A549 (cell line): ENCODE measurements at regions of chr2 and their contacts with region 1.

Region 1: GRCh38 chr2:62774555-62775366 is 69.2 kb downstream of the EHBP1 start:
- DNase-seq: peak in 1 of 2 experiments; percentile 83
- ATAC-seq: peak; percentile 72 to 89; a peak in 5 of 6 replicates
- H3K4me3 ChIP-seq: no peak overlapping the region
- H3K27ac ChIP-seq: peak overlapping the region; percentile 74 to 86
- H3K4me1 ChIP-seq: peaks cover 66% of the 10 kb centered on the region
- CTCF ChIP-seq: peak; percentile 95
- EP300 ChIP-seq: no peak
- POLR2A ChIP-seq: no peak
- RAD21 ChIP-seq: peak; percentile 94 to 97

Region 2: DNA sequence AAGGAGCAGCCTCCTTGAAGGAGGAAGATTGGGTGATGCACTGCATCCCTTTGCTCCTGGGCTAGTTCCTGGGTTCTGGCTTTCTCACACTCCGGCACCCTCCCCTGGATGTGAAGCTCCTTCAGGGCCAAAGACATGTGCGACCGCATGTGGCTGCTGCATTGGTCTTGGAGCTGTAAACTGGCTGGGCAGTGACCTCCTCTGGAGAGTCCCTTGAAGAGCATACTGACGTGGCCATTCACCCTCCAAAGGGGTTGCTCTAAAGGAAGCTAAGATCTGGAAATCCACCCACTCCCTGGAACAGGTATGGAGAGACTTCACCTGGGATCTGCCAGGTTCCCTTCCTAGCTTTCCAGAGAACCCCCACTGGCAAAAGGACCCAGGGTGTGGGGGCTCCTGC is 330.9 kb before region 1 on chr2:
- CTCF ChIA-PET with region 1: interaction called, 13 read pairs
- POLR2A ChIA-PET with region 1: no interaction called
- DNase-seq: no peak
- ATAC-seq: peak in 1 of 2 experiments; percentile 57; a peak in 3 of 6 replicates
- H3K4me3 ChIP-seq: no peak overlapping the region
- H3K27ac ChIP-seq: no peak overlapping the region
- H3K4me1 ChIP-seq: no peaks in the 10 kb centered on the region
- CTCF ChIP-seq: no peak
- EP300 ChIP-seq: no peak
- POLR2A ChIP-seq: no peak
- RAD21 ChIP-seq: no peak; a peak in 1 of 5 replicates

Region 3: GRCh38 chr2:62467475-62468321 is 307.1 kb before region 1 on chr2:
- CTCF ChIA-PET with region 1: interaction called, 318 read pairs
- POLR2A ChIA-PET with region 1: no interaction called
- DNase-seq: peak; percentile 25 to 41
- ATAC-seq: peak; percentile 36 to 67; a peak in 4 of 6 replicates
- H3K4me3 ChIP-seq: no peak overlapping the region
- H3K27ac ChIP-seq: peak overlapping the region; percentile 14 to 79; a peak in 5 of 6 replicates
- H3K4me1 ChIP-seq: peaks cover 11% of the 10 kb centered on the region; the same call in 2 of the 3 replicates
- CTCF ChIP-seq: no peak
- EP300 ChIP-seq: no peak
- POLR2A ChIP-seq: no peak
- RAD21 ChIP-seq: no peak

Region 4: GRCh38 chr2:62705007-62705829 is 69.5 kb before region 1 on chr2 and contains the start of gene EHBP1:
- CTCF ChIA-PET with region 1: interaction called, 18 read pairs
- POLR2A ChIA-PET with region 1: interaction called, 9 read pairs
- DNase-seq: peak; percentile 98 to 100
- ATAC-seq: peak; percentile 91 to 96
- H3K4me3 ChIP-seq: peak within 1 kb of the TSS; percentile 68
- H3K27ac ChIP-seq: peak within 1 kb of the TSS; percentile 94 to 97
- H3K4me1 ChIP-seq: peaks cover 22% of the 10 kb centered on the region
- CTCF ChIP-seq: no peak
- EP300 ChIP-seq: no peak
- POLR2A ChIP-seq: peak; percentile 91
- RAD21 ChIP-seq: peak in 1 of 2 experiments; percentile 29; a peak in 1 of 5 replicates
- polyA plus RNA-seq, gene EHBP1: 145 and 204 TPM in 2 replicates

Region 5: DNA sequence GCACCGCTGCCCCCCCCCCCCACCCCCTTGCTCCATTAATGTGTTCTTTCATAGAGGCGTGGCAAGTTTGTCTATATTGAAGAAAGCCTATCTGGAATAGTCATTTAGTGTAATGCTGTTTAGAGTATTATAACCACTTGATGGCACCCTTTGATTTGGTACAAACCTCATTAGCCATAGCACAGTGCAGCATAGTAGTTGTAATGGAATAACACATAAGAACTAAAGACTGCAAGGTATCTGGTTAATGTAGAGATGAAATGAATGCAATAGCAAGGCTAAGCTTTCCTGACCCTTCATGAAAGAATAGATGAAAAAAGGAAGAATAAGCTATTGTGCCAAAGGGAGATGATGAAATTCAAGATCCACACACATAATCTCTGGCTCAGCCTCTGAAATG is 12.6 kb after region 1 on chr2:
- CTCF ChIA-PET with region 1: interaction called, 37 read pairs
- POLR2A ChIA-PET with region 1: no interaction called
- DNase-seq: peak in 1 of 2 experiments; percentile 50
- ATAC-seq: peak; percentile 88
- H3K4me3 ChIP-seq: no peak overlapping the region
- H3K27ac ChIP-seq: peak overlapping the region; percentile 5 to 35; a peak in 2 of 6 replicates
- H3K4me1 ChIP-seq: peaks cover 80% of the 10 kb centered on the region
- CTCF ChIP-seq: peak; percentile 69
- EP300 ChIP-seq: no peak
- POLR2A ChIP-seq: no peak
- RAD21 ChIP-seq: peak; percentile 78 to 79